ENCODE measurements at regions of chr3 and their contacts with region 1.

Region 1: GRCh38 chr3:51379301-51379700 is 5.8 kb upstream of the MANF start:
- DNase-seq: no peak
- ATAC-seq: no peak
- H3K4me3 ChIP-seq: no peak overlapping the region
- H3K27ac ChIP-seq: no peak overlapping the region
- H3K4me1 ChIP-seq: peaks cover 8% of the 10 kb centered on the region; the same call in 2 of the 3 replicates
- CTCF ChIP-seq: no peak
- EP300 ChIP-seq: no peak
- POLR2A ChIP-seq: no peak
- RAD21 ChIP-seq: no peak

Region 2: DNA sequence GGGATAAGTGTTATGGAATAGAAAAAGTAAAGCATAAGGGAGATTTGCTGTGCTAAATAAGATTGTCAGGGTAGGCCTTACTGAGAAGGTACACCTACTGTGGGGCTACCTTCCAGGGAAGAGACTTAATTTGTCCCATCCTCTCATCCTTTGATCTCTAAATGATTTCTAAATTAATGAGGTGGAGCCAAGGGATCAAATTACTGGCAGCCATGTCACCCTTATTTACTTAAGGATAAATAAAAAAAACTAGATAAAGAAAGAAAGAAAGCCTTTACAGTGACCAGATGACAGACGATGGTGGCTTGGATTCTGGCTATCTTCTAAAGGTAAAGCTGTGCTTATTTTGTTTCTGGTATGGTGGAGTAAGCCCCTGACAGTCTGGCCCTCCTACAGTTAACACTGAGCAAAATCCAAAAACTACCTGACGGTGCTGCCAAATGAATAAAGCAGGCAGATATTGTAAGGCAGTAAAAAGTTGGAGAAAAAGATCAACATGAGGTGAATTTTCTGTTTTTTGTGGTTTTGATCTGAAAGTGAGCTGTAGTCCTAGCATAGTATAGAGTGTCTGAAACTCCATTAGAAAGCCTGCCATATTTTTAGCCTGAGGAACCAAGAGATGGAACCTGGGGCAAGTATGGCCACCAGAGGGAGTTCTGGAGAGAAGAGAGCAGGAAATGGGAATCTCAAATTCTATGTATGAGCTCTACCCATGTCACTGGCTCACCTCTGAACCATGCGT is 279.3 kb before region 1 on chr3:
- CTCF ChIA-PET with region 1: interaction called, 10 read pairs
- POLR2A ChIA-PET with region 1: no interaction called
- DNase-seq: peak; percentile 22 to 49
- ATAC-seq: peak; percentile 90 to 96
- H3K4me3 ChIP-seq: no peak overlapping the region
- H3K27ac ChIP-seq: no peak overlapping the region
- H3K4me1 ChIP-seq: no peaks in the 10 kb centered on the region
- CTCF ChIP-seq: peak; percentile 60
- EP300 ChIP-seq: no peak
- POLR2A ChIP-seq: no peak
- RAD21 ChIP-seq: peak; percentile 58 to 62; a peak in 4 of 5 replicates

Region 3: GRCh38 chr3:51350751-51351150 is 28.6 kb before region 1 on chr3:
- CTCF ChIA-PET with region 1: no interaction called
- POLR2A ChIA-PET with region 1: no interaction called
- DNase-seq: no peak
- ATAC-seq: no peak
- H3K4me3 ChIP-seq: no peak overlapping the region
- H3K27ac ChIP-seq: no peak overlapping the region
- H3K4me1 ChIP-seq: no peaks in the 10 kb centered on the region
- CTCF ChIP-seq: no peak
- EP300 ChIP-seq: no peak
- POLR2A ChIP-seq: no peak
- RAD21 ChIP-seq: no peak

Region 4: DNA sequence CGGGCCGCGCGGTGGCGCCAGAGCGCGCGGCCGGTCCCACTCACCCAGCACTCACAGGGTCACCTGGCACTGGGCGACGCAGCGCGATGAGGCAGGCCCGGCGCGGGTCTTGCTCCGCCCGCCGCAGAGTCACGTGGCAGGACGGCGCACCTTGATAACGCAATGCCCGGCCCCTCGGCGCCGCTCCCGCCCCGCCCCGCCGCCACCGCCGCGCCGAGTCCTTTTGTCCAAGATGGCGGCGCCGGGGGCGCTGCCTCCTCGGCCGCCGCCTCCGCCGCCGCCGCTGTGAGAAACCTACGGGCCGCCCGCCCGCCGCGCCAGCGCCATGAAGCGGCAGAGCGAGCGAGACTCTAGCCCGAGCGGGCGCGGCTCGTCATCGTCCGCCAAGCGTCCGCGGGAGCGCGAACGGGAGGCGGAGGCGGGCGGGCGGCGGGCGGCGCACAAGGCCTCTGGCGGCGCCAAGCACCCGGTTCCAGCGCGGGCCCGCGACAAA is 11.8 kb after region 1 on chr3 and contains the start of gene RBM15B:
- CTCF ChIA-PET with region 1: interaction called, 28 read pairs
- POLR2A ChIA-PET with region 1: no interaction called
- DNase-seq: peak; percentile 82 to 95
- ATAC-seq: peak; percentile 88 to 93
- H3K4me3 ChIP-seq: peak within 1 kb of the TSS; percentile 92
- H3K27ac ChIP-seq: peak within 1 kb of the TSS; percentile 94 to 99
- H3K4me1 ChIP-seq: peaks cover 38% of the 10 kb centered on the region
- CTCF ChIP-seq: peak; percentile 75
- EP300 ChIP-seq: no peak
- POLR2A ChIP-seq: peak; percentile 61; the same call in 1 of the 2 replicates
- RAD21 ChIP-seq: peak; percentile 34 to 41; a peak in 2 of 5 replicates
- polyA plus RNA-seq, gene RBM15B: 7.9 and 10.9 TPM in 2 replicates

Region 5: GRCh38 chr3:51422211-51422610 is 42.9 kb after region 1 on chr3:
- CTCF ChIA-PET with region 1: no interaction called
- POLR2A ChIA-PET with region 1: no interaction called
- DNase-seq: no peak
- ATAC-seq: no peak
- H3K4me3 ChIP-seq: no peak overlapping the region
- H3K27ac ChIP-seq: no peak overlapping the region
- H3K4me1 ChIP-seq: no peaks in the 10 kb centered on the region
- CTCF ChIP-seq: no peak
- EP300 ChIP-seq: no peak
- POLR2A ChIP-seq: no peak
- RAD21 ChIP-seq: no peak

Region 6: GRCh38 chr3:51445544-51446280 is 66.4 kb after region 1 on chr3:
- CTCF ChIA-PET with region 1: no interaction called
- POLR2A ChIA-PET with region 1: no interaction called
- DNase-seq: no peak
- ATAC-seq: no peak
- H3K4me3 ChIP-seq: no peak overlapping the region
- H3K27ac ChIP-seq: no peak overlapping the region
- H3K4me1 ChIP-seq: 0 out of 3 replicates have a peak, but pooled peaks cover 4% of the 10 kb centered on the region
- CTCF ChIP-seq: no peak
- EP300 ChIP-seq: no peak
- POLR2A ChIP-seq: no peak
- RAD21 ChIP-seq: no peak